ENCODE measurements at regions of chr1 and their contacts with region 1.

Region 1: GRCh38 chr1:29181413-29182225 is at the start of gene SRSF4:
- DNase-seq: peak; percentile 97
- H3K27ac ChIP-seq: peak within 1 kb of the TSS; percentile 95
- CTCF ChIP-seq: peak; percentile 82

Region 2: DNA sequence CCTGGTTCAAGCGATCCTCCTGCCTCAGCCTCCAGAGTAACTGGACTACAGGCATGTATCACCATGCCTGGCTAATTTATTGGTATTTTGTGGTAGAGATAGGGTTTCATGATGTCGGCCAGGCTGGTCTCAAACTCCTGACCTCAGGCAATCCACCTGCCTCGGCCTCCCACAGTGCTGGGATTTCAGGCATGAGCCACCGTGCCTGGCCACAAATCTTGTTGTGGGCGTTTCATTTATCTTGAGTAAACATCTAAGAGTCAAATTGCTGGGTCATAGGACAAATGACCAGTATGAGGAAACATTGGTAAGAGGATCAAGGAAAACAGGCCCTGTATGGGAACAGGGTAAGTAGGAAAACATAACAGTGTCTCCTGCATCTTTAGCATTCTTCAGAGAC is 75.8 kb before region 1 on chr1:
- CTCF ChIA-PET with region 1: no interaction called
- POLR2A ChIA-PET with region 1: no interaction called
- DNase-seq: no peak
- H3K27ac ChIP-seq: no peak overlapping the region
- CTCF ChIP-seq: no peak

Region 3: DNA sequence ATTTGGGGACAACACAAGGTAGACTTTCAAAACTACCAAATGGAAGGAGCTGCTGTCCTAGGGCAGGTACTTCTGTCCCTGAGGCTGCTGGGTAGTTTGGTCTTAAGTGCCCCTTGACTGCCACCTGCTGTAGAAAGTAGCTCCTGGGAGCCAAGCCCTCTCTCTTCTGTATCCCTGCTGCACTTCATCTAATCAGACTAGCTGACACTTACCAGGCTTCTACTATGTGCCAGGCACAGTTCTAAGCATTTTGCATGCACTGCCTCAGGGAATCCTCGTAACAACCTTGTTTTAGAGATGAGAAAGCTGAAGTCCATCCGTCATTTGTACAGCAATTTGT is 15.9 kb after region 1 on chr1:
- CTCF ChIA-PET with region 1: interaction called, 13 read pairs
- POLR2A ChIA-PET with region 1: interaction called, 7 read pairs
- DNase-seq: no peak
- H3K27ac ChIP-seq: no peak overlapping the region
- CTCF ChIP-seq: no peak

Region 4: DNA sequence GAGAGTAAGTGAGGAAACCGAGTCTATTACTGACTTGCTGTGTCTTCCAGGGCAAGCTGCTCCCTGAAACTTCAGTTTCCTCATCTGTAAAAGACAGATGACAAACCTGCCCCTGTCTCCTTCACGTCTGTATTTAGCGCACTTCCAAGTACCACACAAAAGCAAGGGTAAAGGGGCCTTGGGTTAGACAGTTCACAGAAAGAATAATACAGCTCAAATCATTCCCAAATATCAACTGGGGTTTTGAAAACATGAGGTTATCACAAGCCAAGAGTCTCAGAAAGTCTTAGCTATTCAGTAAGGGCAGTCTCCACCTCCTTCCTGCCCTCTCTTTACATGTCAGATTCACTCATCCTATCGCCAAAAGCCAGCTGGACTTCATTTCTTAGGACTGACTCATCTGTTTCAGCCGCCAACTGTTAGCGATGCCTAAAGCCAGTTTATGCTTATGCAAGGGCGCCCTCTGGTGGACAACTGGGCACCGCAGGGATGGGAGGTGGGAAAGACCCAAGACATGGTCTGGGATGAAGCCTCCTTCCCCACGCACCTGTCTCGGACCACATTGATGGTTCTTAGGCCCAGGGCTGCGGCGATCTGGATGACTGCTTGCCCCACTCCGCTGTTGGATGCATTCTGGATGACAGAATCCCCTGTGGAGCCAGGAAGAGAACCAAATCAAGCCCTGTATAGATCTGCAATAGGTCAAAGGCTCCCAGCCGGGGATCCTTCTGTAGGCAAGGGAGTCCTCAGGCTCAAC is 21.1 kb after region 1 on chr1:
- CTCF ChIA-PET with region 1: interaction called, 13 read pairs
- POLR2A ChIA-PET with region 1: interaction called, 7 read pairs
- DNase-seq: peak; percentile 96
- H3K27ac ChIP-seq: peak overlapping the region; percentile 9; the same call in 1 of the 2 replicates
- CTCF ChIP-seq: peak; percentile 91

Measured in RWPE1 (cell line).